ENCODE measurements at regions of chr5 and their contacts with region 1.

Region 1: DNA sequence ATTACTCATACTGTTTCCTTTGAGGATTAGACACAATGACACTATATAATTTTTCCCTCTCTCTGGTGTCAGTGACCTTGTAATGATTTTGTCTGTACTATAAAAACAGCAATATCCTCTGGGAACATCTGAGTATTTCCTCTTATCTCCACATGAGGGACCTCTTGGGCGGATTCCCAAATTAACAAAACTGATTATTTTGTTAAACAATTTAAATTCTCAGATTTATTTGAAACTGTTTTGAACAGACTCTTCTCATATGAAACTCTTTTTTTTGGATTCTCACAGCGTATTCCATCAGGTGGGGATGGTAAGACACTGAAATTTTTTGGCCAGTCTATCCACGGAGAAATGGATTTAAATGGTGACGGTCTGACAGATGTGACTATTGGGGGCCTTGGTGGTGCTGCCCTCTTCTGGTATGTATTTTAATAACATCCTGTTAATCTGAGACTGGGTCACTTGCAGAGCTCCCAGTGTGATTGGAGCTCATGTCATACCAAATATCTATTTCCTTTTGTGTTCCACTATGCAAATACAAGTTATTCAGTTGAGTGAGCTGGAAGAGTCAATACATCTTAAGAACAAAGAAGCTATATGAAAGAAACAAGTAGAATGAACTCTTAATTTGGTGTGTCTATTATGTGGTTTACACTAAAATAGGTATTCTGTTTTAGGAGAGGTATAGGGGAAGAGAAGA is 73.8 kb upstream of the ITGA2 start:
- H3K4me3 Mint-ChIP-seq: peak overlapping the region; percentile 67
- H3K27ac Mint-ChIP-seq: no peak overlapping the region
- H3K4me1 Mint-ChIP-seq: no peaks in the 10 kb centered on the region
- H3K27me3 Mint-ChIP-seq: peaks cover 4% of the 10 kb centered on the region

Region 2: GRCh38 chr5:52693280-52693679 is 222.0 kb before region 1 on chr5:
- intact Hi-C with region 1: loop called (anchors 1 kb)
- H3K4me3 Mint-ChIP-seq: no peak overlapping the region
- H3K27ac Mint-ChIP-seq: no peak overlapping the region
- H3K4me1 Mint-ChIP-seq: no peaks in the 10 kb centered on the region
- H3K27me3 Mint-ChIP-seq: no peaks in the 10 kb centered on the region

Region 3: DNA sequence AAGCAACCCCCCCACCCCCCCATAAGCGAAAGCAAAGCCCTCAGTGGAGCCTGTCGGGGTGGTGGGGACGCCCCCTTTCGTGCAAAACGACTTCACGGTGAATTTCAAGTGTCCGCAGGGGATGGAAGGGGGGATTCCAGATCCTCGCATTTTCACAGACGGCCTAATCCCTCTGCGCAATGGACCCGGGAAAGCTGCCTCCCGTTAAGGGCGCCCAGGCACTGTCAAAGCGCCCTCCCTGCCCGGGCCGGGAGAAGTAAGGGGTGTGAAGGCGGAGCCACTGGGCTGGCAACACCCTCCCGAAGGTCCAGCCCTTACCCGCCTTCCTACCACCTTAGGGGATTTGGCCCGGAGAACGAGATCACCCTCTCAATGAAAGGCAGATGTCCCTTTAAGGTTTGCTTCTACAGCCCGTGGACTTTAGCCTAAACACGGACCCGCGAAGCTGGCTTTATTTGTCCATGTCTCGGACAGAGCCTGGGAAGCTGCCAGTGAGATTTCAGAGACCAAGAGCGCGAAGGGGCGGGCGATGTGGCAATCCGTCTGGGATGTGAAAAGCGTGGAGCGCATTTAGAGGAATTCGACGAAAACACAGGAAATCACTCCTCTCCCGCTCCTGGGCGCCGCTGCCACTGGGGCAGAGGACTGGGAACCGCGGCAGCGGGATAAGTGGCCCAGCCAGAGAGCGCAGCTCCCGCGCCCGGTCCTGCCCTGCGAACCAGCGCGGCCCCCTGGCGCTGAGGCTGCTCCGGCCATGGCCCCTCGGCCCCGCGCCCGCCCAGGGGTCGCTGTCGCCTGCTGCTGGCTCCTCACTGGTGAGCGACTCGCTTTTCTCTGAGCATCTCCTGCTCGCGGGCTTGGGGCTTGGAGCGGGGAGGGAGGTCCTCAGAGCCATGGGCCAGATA is 127.5 kb before region 1 on chr5 and contains the starts of genes ITGA1 and PELO:
- intact Hi-C with region 1: loop called (anchors 10 kb)
- H3K4me3 Mint-ChIP-seq: peak within 1 kb of the TSS; percentile 86
- H3K27ac Mint-ChIP-seq: peak within 1 kb of the TSS; percentile 70
- H3K4me1 Mint-ChIP-seq: peaks cover 40% of the 10 kb centered on the region
- H3K27me3 Mint-ChIP-seq: peaks cover 21% of the 10 kb centered on the region

Region 4: GRCh38 chr5:52878656-52879055 is 36.7 kb before region 1 on chr5:
- intact Hi-C with region 1: no loop called
- H3K4me3 Mint-ChIP-seq: no peak overlapping the region
- H3K27ac Mint-ChIP-seq: no peak overlapping the region
- H3K4me1 Mint-ChIP-seq: peaks cover 7% of the 10 kb centered on the region
- H3K27me3 Mint-ChIP-seq: no peaks in the 10 kb centered on the region

Measured in dendritic cell treated with granulocyte-macrophage colony-stimulating factor and Interleukin-4, amounts not matched to agents 40 ng/mL and 50 ng/mL, for 4 days (primary cell).